Activated naive CD8-positive, alpha-beta T cell treated with anti-CD3 and anti-CD28 coated beads, Interleukin-2, amount 10 ng/mL, durations not matched to agents 7 days and 5 days (primary cell): ENCODE measurements at regions of chr15 and their contacts with region 1.

Region 1: GRCh38 chr15:56245871-56246814 is 2.5 kb upstream of the RFX7 start:
- DNase-seq: peak; percentile 89
- ATAC-seq: peak; percentile 69
- H3K4me3 Mint-ChIP-seq: peak overlapping the region; percentile 84
- H3K27ac Mint-ChIP-seq: peak overlapping the region; percentile 99
- H3K4me1 Mint-ChIP-seq: peaks cover 27% of the 10 kb centered on the region
- H3K27me3 Mint-ChIP-seq: no peaks in the 10 kb centered on the region

Region 2: GRCh38 chr15:56464893-56465520 is 218.9 kb after region 1 on chr15 and contains the start of gene MNS1:
- POLR2A ChIA-PET with region 1: interaction called, 11 read pairs
- DNase-seq: peak; percentile 87
- ATAC-seq: peak; percentile 98
- H3K4me3 Mint-ChIP-seq: peak within 1 kb of the TSS; percentile 90
- H3K27ac Mint-ChIP-seq: peak within 1 kb of the TSS; percentile 86
- H3K4me1 Mint-ChIP-seq: peaks cover 20% of the 10 kb centered on the region
- H3K27me3 Mint-ChIP-seq: peaks cover 10% of the 10 kb centered on the region
- total RNA-seq, gene MNS1: 0.80 to 0.85 TPM